HEK293 (cell line): ENCODE measurements at regions of chr9 and their contacts with region 1.

Region 1: DNA sequence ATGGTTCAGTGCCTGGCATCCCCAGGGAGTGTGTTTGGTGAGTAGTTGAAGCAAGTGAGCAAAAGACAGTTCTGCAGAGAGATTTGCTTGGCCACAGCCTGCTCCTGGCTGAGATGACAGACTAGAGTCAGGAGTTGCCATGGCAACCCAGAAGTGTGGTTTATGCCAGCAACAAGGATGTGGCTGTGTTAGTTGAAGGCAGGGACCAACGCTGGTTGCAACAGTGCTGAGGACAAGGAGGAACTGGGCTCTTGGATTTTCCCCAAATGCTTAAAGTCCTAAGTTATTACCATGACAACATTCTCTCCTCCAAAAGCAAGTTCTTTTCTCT is 2.7 kb downstream of the NXNL2 start:
- H3K4me3 ChIP-seq: no peak overlapping the region
- H3K27ac ChIP-seq: no peak overlapping the region
- H3K4me1 ChIP-seq: no peaks in the 10 kb centered on the region
- CTCF ChIP-seq: no peak

Region 2: DNA sequence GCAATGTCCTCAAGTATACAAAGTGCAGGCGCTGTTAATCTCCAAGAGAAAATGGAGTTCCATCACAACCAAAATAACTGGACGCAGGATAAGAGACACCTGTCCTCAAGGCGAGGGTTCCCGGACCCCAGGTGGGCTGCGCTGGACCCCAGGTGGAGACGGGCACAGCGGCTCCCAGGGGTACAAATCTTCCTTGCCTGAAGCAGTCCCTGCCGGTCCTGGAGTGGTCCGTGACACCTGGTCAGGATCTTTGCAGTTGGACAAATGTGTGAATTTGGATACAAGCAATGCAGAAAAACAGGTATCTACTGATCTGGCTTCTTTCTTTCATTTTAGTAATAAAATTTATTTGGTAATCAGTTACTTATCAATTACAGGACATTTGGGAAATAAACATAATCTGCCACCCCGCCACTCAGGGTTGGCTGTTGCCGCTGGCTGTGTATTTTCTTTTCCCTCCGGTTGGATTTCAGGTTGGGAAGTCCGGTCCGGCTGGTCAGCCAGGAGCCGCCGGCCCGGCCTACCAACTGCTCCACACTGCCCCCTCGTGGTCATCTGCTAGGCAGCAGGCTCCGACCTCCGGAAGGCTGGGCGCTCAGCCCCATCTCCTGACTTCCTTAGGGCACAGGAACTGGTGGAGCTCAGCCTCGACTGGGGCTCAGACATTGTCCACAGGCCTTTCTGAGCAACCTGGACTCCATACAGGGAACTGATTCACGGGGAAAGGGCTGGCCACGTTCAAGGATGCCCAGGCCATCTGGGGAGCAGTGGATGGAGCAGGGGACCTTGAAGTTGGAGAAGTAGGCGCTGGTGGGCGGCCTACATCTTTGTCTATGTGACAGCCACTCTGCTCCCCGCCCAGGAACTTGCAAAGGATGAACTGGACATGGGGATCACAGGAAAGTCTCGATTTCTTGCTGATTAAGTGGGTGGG is 40.7 kb after region 1 on chr9:
- CTCF ChIA-PET with region 1: interaction called, 10 read pairs
- POLR2A ChIA-PET with region 1: no interaction called
- H3K4me3 ChIP-seq: no peak overlapping the region
- H3K27ac ChIP-seq: no peak overlapping the region
- H3K4me1 ChIP-seq: no peaks in the 10 kb centered on the region
- CTCF ChIP-seq: peak; percentile 61

Region 3: DNA sequence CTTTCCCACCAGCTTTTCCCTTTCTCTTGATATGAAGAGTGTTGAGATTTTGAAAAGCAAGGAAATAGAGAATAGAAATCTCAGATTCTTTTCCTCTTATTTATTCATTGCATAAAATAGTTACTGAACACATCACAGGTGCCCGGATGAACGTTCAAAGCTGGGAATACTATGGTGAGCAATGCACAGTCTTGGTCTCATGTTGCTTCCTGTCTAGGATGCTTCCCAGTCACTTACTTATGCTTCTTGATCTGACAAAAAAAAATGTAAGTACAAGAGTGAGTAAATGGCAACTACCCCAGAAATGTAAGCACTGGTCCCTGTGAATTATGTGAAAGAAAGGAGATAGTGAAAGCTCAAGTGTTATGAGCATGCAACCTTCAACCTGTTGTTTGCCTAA is 300.0 kb after region 1 on chr9:
- CTCF ChIA-PET with region 1: no interaction called
- POLR2A ChIA-PET with region 1: no interaction called
- H3K4me3 ChIP-seq: no peak overlapping the region
- H3K27ac ChIP-seq: no peak overlapping the region
- H3K4me1 ChIP-seq: 0 out of 2 replicates have a peak, but pooled peaks cover 3% of the 10 kb centered on the region
- CTCF ChIP-seq: no peak